ENCODE measurements at regions of chr1 and their contacts with region 1.

Region 1: GRCh38 chr1:44652445-44653106 is 21.7 kb downstream of the TMEM53 start:
- DNase-seq: peak; percentile 82
- H3K4me3 ChIP-seq: no peak overlapping the region
- H3K27ac ChIP-seq: no peak overlapping the region
- H3K4me1 ChIP-seq: no peaks in the 10 kb centered on the region
- H3K27me3 ChIP-seq: no peaks in the 10 kb centered on the region
- CTCF ChIP-seq: peak; percentile 95

Region 2: DNA sequence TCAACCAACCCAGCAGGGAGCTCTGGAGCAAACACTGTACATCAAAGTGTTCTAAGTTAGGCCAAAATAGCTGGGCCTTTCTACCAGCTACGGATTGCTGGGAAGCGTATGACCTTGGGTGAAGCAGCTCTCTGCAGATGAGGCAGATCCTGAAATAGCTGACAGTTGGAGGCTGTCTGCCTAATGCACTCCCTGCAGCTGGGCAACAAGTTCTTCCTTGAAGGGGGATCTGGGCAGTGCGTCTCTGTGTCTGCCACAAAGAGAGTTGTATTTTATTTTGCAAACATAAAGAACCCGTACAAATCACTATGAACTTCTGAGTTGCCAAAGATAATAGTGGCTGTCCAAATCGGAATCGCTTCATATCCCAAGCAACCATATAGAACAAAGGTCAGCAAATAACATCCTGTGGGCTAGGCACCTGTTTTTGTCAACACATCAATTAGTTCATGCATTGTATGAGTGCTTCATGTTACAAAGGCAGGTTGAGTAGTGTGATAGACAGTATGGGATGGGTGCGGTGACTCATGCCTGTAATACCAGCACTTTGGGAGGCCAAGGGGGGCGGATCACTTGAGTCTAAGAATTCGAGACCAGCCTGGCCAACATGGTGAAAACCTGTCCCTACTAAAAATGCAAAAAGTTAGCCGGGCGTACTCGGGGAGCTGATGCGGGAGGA is 563.1 kb before region 1 on chr1:
- CTCF ChIA-PET with region 1: interaction called, 7 read pairs
- POLR2A ChIA-PET with region 1: no interaction called
- intact Hi-C with region 1: loop called (anchors 10 kb)
- DNase-seq: no peak
- H3K4me3 ChIP-seq: no peak overlapping the region
- H3K27ac ChIP-seq: no peak overlapping the region
- H3K4me1 ChIP-seq: no peaks in the 10 kb centered on the region
- H3K27me3 ChIP-seq: no peaks in the 10 kb centered on the region
- CTCF ChIP-seq: no peak

Region 3: DNA sequence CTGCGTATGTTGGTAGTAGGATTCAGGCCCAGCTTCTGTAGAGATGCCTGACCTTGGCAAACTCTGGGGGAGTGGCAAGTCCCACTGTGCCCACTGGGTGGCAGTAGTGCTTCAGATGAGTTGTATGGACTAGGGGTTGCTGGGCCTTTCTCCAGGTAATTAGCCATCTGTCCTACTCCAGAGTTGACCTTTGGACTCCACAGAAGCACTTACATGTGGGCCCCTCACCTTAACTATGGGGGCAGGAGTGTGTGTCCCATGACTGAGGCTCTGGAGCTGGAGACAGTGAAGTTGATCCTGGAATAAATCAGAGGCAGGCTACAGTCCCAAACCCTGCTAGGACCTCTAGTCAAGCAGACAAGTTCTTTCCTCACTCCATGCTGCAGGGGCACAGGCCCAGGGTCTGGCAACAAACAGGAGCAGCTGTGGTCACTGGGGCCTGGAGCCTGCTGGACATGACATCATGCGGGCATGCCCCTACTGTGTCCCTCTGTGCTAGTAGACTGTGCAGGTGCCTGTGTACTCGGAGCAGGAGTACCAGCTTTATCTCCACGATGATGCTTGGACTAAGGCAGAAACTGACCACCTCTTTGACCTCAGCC is 434.7 kb before region 1 on chr1:
- CTCF ChIA-PET with region 1: interaction called, 8 read pairs
- POLR2A ChIA-PET with region 1: no interaction called
- intact Hi-C with region 1: loop called (anchors 5 kb)
- DNase-seq: peak; percentile 72
- H3K4me3 ChIP-seq: no peak overlapping the region
- H3K27ac ChIP-seq: no peak overlapping the region
- H3K4me1 ChIP-seq: peaks cover under 1% of the 10 kb centered on the region
- H3K27me3 ChIP-seq: no peaks in the 10 kb centered on the region
- CTCF ChIP-seq: peak; percentile 94

Region 4: DNA sequence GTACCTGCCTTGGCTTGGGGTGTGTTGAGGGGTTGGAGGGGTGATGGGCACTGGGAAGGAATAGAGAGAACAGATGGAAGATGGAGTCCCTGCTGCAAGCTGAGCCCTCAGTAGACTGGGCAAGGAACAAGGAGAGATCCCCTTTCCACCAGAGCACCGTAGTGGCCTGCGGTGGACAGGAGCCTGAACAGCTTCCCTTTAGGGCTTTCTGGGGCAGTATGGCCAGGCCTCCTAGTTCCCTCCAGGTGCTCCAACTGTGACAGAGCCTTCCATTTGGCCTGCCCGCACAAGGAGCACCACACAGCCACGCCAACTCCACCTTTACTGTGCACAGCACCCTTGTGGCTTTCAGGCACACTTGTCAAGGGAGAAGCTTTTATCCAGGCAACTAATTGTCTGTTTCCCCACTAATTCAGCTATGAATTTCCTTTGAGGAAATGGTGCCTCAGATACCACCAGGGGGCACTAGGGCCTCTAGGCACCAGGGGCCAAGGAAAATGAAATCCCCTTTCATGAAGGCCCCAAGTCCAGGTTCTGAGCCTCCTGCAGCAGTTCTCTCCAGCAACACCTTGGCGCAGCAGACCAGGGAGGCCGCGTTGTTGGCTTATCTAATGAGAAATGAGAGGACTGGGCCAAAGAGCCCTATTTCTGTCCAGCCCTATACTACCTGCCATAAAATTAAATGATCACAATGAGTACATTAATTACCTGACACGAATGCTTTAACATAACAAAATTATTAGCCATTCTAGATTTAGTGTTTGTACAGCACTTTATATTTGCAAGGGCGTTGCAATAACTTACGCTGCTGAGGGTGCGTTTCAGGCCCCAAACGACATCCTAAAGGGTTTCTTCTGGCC is 274.4 kb before region 1 on chr1:
- CTCF ChIA-PET with region 1: interaction called, 14 read pairs
- POLR2A ChIA-PET with region 1: no interaction called
- intact Hi-C with region 1: loop called (anchors 1 kb)
- DNase-seq: peak; percentile 71
- H3K4me3 ChIP-seq: no peak overlapping the region
- H3K27ac ChIP-seq: no peak overlapping the region
- H3K4me1 ChIP-seq: no peaks in the 10 kb centered on the region
- H3K27me3 ChIP-seq: peaks cover 7% of the 10 kb centered on the region
- CTCF ChIP-seq: peak; percentile 78

Region 5: GRCh38 chr1:44559330-44559729 is 93.2 kb before region 1 on chr1:
- CTCF ChIA-PET with region 1: no interaction called
- POLR2A ChIA-PET with region 1: no interaction called
- intact Hi-C with region 1: no loop called
- DNase-seq: no peak
- H3K4me3 ChIP-seq: no peak overlapping the region
- H3K27ac ChIP-seq: no peak overlapping the region
- H3K4me1 ChIP-seq: no peaks in the 10 kb centered on the region
- H3K27me3 ChIP-seq: no peaks in the 10 kb centered on the region
- CTCF ChIP-seq: no peak

Region 6: GRCh38 chr1:44571712-44572571 is 80.6 kb before region 1 on chr1:
- CTCF ChIA-PET with region 1: interaction called, 17 read pairs
- POLR2A ChIA-PET with region 1: no interaction called
- intact Hi-C with region 1: loop called (anchors 2 kb)
- DNase-seq: peak; percentile 31
- H3K4me3 ChIP-seq: no peak overlapping the region
- H3K27ac ChIP-seq: no peak overlapping the region
- H3K4me1 ChIP-seq: no peaks in the 10 kb centered on the region
- H3K27me3 ChIP-seq: no peaks in the 10 kb centered on the region
- CTCF ChIP-seq: peak; percentile 67

Region 7: GRCh38 chr1:44587796-44588460 is 64.6 kb before region 1 on chr1:
- CTCF ChIA-PET with region 1: no interaction called
- POLR2A ChIA-PET with region 1: no interaction called
- intact Hi-C with region 1: no loop called
- DNase-seq: no peak
- H3K4me3 ChIP-seq: no peak overlapping the region
- H3K27ac ChIP-seq: no peak overlapping the region
- H3K4me1 ChIP-seq: no peaks in the 10 kb centered on the region
- H3K27me3 ChIP-seq: no peaks in the 10 kb centered on the region
- CTCF ChIP-seq: no peak

Region 8: GRCh38 chr1:44609412-44609767 is 43.2 kb before region 1 on chr1:
- CTCF ChIA-PET with region 1: interaction called, 5 read pairs
- POLR2A ChIA-PET with region 1: no interaction called
- intact Hi-C with region 1: loop called (anchors 2 kb)
- DNase-seq: peak; percentile 32
- H3K4me3 ChIP-seq: no peak overlapping the region
- H3K27ac ChIP-seq: no peak overlapping the region
- H3K4me1 ChIP-seq: peaks cover 8% of the 10 kb centered on the region
- H3K27me3 ChIP-seq: no peaks in the 10 kb centered on the region
- CTCF ChIP-seq: peak; percentile 52